Activated T-helper 1 cell treated with anti-CD3 and anti-CD28 coated beads, Interleukin-12 subunit alpha, Interleukin-12 subunit beta, Interleukin-2, Interleukin-4 antibody, amounts not matched to agents 30 ng/mL and 10 ng/mL and 1 ng/mL, durations not matched to agents 14 hours and 24 hours and 36 hours (primary cell): ENCODE measurements at regions of chr20 and their contacts with region 1.

Region 1: GRCh38 chr20:50189681-50190582 is 698 bp upstream of the CEBPB start:
- DNase-seq: peak; percentile 82
- H3K4me3 Mint-ChIP-seq: peak overlapping the region; percentile 51
- H3K27ac Mint-ChIP-seq: peak overlapping the region; percentile 65
- H3K4me1 Mint-ChIP-seq: peaks cover 32% of the 10 kb centered on the region
- H3K27me3 Mint-ChIP-seq: peaks cover 6% of the 10 kb centered on the region

Region 2: GRCh38 chr20:50385733-50386640 is 196.1 kb after region 1 on chr20:
- intact Hi-C with region 1: loop called (anchors 5 kb)
- DNase-seq: peak; percentile 77
- H3K4me3 Mint-ChIP-seq: peak overlapping the region; percentile 57
- H3K27ac Mint-ChIP-seq: peak overlapping the region; percentile 90
- H3K4me1 Mint-ChIP-seq: peaks cover 76% of the 10 kb centered on the region
- H3K27me3 Mint-ChIP-seq: peaks cover 3% of the 10 kb centered on the region

Region 3: GRCh38 chr20:50509935-50510705 is 320.2 kb after region 1 on chr20 and contains the start of gene PTPN1:
- intact Hi-C with region 1: loop called (anchors 1 kb)
- DNase-seq: peak; percentile 99
- H3K4me3 Mint-ChIP-seq: peak within 1 kb of the TSS; percentile 93
- H3K27ac Mint-ChIP-seq: peak within 1 kb of the TSS; percentile 91
- H3K4me1 Mint-ChIP-seq: peaks cover 48% of the 10 kb centered on the region
- H3K27me3 Mint-ChIP-seq: no peaks in the 10 kb centered on the region
- total RNA-seq, gene PTPN1: 60.0 and 60.5 TPM in 2 replicates

Region 4: GRCh38 chr20:50575847-50576720 is 386.2 kb after region 1 on chr20:
- intact Hi-C with region 1: loop called (anchors 1 kb)
- DNase-seq: peak; percentile 37
- H3K4me3 Mint-ChIP-seq: no peak overlapping the region
- H3K27ac Mint-ChIP-seq: peak overlapping the region; percentile 71
- H3K4me1 Mint-ChIP-seq: peaks cover 28% of the 10 kb centered on the region
- H3K27me3 Mint-ChIP-seq: no peaks in the 10 kb centered on the region

Region 5: DNA sequence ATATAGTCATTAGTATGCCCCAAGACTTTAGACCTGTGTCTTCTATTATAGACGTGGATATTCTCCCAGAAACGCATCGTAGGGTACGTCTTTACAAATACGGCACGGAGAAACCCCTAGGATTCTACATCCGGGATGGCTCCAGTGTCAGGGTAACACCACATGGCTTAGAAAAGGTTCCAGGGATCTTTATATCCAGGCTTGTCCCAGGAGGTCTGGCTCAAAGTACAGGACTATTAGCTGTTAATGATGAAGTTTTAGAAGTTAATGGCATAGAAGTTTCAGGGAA is 559.8 kb after region 1 on chr20:
- intact Hi-C with region 1: loop called (anchors 2 kb)
- DNase-seq: no peak
- H3K4me3 Mint-ChIP-seq: no peak overlapping the region
- H3K27ac Mint-ChIP-seq: no peak overlapping the region
- H3K4me1 Mint-ChIP-seq: peaks cover 26% of the 10 kb centered on the region
- H3K27me3 Mint-ChIP-seq: no peaks in the 10 kb centered on the region